Naive thymus-derived CD4-positive, alpha-beta T cell (primary cell): ENCODE measurements at regions of chr9 and their contacts with region 1.

Region 1: DNA sequence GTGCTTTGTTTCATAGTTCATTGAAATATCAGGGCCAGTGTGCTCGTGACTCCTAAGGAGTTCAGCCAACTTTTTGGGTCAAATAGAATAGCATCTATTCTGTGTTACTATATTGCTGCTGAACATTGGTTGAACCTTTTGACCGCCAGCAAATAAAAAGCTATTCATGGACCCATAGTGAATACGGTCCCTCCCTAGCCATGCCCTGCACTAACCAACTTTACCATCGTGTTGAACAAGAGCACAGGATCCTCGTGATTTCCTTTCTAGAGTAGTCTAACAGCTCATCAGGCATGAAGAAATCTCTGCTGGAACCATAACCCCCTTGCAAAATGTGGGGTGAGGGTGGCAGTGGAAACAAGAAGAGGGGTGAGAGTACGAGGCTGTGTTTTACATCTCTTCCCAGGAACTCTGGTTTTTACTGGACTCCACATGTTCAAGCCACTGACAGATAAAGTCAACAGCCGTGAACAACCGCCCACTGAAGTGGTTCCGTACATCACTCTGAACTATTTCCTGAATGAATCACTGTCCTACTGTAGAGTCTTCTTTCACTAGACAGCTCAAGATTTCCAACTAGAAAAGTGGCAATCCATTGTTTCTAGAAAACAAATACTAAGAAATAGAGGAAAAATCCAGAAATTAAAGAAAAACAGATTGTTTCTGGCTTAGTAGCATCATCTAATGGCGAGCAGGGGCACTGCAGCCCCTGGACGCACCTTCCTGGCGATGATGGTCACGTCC is 70.1 kb upstream of the SPATA31E1 start:
- DNase-seq: peak in 2 of 9 donors; percentile 10 to 46
- ATAC-seq: peak; percentile 66
- H3K4me3 ChIP-seq: no peak overlapping the region
- H3K4me3 Mint-ChIP-seq: peak overlapping the region in 7 of 10 donors; percentile 15 to 67 (median 47)
- H3K27ac ChIP-seq: no peak overlapping the region
- H3K27ac Mint-ChIP-seq: peak overlapping the region in 1 of 9 donors; percentile 6
- H3K4me1 ChIP-seq: no peaks in the 10 kb centered on the region
- H3K4me1 Mint-ChIP-seq: peaks cover 0 to 20% (median 11%) of the 10 kb centered on the region in 7 donors
- H3K27me3 ChIP-seq: no peaks in the 10 kb centered on the region
- H3K27me3 Mint-ChIP-seq: peaks cover 0 to 13% (median 6%) of the 10 kb centered on the region in 5 donors

Region 2: DNA sequence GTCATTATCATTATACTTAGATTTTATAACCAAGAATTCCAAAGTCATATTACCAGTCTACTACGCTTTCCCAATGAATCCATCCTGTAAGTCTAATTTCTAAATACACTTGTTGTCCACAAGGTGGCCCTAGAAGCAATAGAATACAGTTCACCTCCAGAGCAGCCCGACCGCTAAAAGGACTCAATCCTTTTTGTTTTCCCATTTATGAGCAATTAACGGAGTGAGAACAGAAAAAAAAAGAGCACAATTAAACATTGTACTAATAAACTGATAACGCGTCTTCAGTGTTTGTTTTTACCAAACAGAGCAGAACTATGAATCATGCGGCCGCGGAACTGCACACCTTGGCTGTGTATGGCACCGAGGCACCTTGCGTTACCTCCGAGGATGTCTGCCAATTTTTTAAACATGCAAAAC is 475.6 kb before region 1 on chr9:
- CTCF ChIA-PET with region 1: no interaction called
- POLR2A ChIA-PET with region 1: no interaction called
- intact Hi-C with region 1: loop called in 1 of 2 experiments (anchors 5 kb)
- DNase-seq: peak in 5 of 9 donors; percentile 17 to 40 (median 29)
- ATAC-seq: peak; percentile 64
- H3K4me3 ChIP-seq: peak overlapping the region; percentile 8
- H3K4me3 Mint-ChIP-seq: peak overlapping the region; percentile 37 to 87 (median 77)
- H3K27ac ChIP-seq: no peak overlapping the region
- H3K27ac Mint-ChIP-seq: no peak overlapping the region
- H3K4me1 ChIP-seq: no peaks in the 10 kb centered on the region
- H3K4me1 Mint-ChIP-seq: peaks cover 0 to 16% (median 11%) of the 10 kb centered on the region in 7 donors
- H3K27me3 ChIP-seq: peaks cover 0 to 6% of the 10 kb centered on the region in 2 donors
- H3K27me3 Mint-ChIP-seq: peaks cover 21 to 59% (median 45%) of the 10 kb centered on the region in 5 donors